A549 (cell line): ENCODE measurements at regions of chr17 and their contacts with region 1.

Region 1: GRCh38 chr17:39547713-39548478 is 59.8 kb downstream of the NEUROD2 start:
- DNase-seq: peak; percentile 69 to 75
- ATAC-seq: peak; percentile 91 to 92
- H3K4me3 ChIP-seq: no peak overlapping the region
- H3K27ac ChIP-seq: no peak overlapping the region
- H3K4me1 ChIP-seq: no peaks in the 10 kb centered on the region
- CTCF ChIP-seq: peak; percentile 99
- EP300 ChIP-seq: no peak
- POLR2A ChIP-seq: no peak
- RAD21 ChIP-seq: peak; percentile 87 to 88

Region 2: DNA sequence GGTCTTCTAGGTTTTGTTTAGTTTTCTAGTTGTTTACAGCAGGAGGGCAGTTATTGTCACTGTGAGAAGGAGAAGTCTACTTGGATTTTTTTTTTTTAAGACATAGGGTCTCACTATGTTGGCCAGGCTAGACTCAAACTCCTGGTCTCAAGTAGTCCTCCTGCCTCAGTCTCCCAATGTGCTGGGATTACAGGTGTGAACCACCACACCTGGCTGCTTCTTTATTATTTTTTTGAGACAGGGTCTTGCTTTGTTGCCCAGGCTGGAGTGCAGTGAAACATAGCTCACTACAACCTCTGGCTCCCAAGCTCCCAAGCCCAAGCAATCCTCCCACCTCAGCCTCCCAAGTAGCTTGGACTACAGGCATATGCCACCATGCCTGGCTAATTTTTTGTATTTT is 253.8 kb before region 1 on chr17:
- CTCF ChIA-PET with region 1: no interaction called
- POLR2A ChIA-PET with region 1: no interaction called
- DNase-seq: no peak
- ATAC-seq: no peak
- H3K4me3 ChIP-seq: no peak overlapping the region
- H3K27ac ChIP-seq: no peak overlapping the region
- H3K4me1 ChIP-seq: no peaks in the 10 kb centered on the region
- CTCF ChIP-seq: no peak
- EP300 ChIP-seq: no peak
- POLR2A ChIP-seq: no peak
- RAD21 ChIP-seq: no peak

Region 3: GRCh38 chr17:39485555-39485954 is 62.3 kb before region 1 on chr17:
- CTCF ChIA-PET with region 1: interaction called, 19 read pairs
- POLR2A ChIA-PET with region 1: no interaction called
- DNase-seq: peak in 1 of 2 experiments; percentile 84
- ATAC-seq: peak; percentile 91 to 100
- H3K4me3 ChIP-seq: no peak overlapping the region
- H3K27ac ChIP-seq: peak overlapping the region; percentile 78 to 83
- H3K4me1 ChIP-seq: peaks cover 34% of the 10 kb centered on the region
- CTCF ChIP-seq: no peak
- EP300 ChIP-seq: peak in 1 of 2 experiments; percentile 18; a peak in 1 of 5 replicates
- POLR2A ChIP-seq: no peak
- RAD21 ChIP-seq: no peak

Region 4: DNA sequence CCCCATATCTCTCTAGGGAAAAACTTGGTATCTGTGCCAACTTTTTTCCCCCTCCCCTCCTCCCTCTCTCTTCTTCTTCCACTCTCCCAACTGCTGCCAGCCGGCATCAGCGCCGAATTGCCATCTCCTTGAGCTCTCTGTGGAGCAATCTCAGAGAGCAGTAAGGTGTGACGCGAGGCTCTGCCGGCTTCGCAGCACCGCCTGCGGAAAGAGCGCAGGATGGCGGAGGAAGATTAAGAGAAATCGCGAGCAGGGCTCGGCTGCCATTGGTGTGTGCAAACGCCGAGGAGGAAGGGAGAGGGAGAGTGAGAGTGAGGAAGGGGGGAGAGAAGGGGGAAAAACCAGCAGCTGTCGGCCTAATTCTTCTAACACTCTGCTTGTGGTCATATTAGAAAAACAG is 15.6 kb after region 1 on chr17:
- CTCF ChIA-PET with region 1: interaction called, 71 read pairs
- POLR2A ChIA-PET with region 1: no interaction called
- DNase-seq: no peak
- ATAC-seq: no peak
- H3K4me3 ChIP-seq: no peak overlapping the region
- H3K27ac ChIP-seq: no peak overlapping the region
- H3K4me1 ChIP-seq: no peaks in the 10 kb centered on the region
- CTCF ChIP-seq: no peak
- EP300 ChIP-seq: no peak
- POLR2A ChIP-seq: no peak
- RAD21 ChIP-seq: no peak

Region 5: DNA sequence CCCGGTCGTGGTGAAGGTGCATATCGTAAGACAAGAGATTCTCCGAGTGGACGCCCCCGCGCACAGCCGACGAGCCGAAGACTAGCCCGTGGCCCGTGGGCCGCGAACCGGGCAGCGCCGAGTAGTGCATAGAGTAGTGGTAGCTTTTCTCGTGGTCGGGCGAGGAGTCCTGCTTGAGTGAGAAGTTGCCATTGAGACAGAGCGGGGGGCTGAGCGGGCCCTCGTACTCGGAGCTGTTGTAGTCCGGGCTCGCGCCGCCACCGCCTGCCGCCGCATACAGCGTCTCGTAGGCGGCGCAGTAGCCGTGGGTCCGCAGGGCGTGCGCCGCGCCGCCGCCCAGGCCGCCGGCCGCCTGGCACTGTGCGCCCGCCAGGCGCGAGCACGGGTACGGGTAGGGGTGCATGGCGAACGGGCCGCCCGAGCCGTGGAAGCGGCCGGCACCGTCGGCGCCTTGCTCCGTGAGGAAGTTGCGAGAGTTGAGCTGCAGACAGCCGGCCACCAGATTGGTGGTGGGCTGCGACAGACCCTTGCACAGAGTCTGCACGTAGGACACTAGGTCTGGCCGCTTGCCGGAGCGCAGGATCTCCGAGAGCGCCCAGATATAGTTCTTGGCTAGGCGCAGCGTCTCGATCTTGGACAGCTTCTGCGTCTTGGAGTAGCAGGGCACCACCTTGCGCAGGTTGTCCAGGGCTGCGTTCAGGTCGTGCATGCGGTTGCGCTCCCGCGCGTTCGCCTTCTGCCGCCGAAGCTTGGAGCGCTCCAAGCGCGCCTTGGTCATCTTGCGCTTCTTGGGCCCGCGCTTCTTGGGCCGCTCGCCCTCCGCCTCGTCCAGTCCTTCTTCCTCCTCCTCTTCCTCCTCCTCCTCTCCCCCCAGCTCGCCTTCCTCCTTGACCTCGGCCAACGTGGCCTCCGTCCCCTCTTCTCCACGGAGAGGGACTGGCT is 57.9 kb after region 1 on chr17:
- CTCF ChIA-PET with region 1: interaction called, 20 read pairs
- POLR2A ChIA-PET with region 1: no interaction called
- DNase-seq: peak in 1 of 2 experiments; percentile 83
- ATAC-seq: peak; percentile 38 to 66
- H3K4me3 ChIP-seq: peak overlapping the region; percentile 30
- H3K27ac ChIP-seq: no peak overlapping the region
- H3K4me1 ChIP-seq: peaks cover 44% of the 10 kb centered on the region
- CTCF ChIP-seq: no peak
- EP300 ChIP-seq: no peak
- POLR2A ChIP-seq: no peak
- RAD21 ChIP-seq: no peak

Region 6: GRCh38 chr17:39653662-39654331 is 105.9 kb after region 1 on chr17:
- CTCF ChIA-PET with region 1: interaction called, 17 read pairs
- POLR2A ChIA-PET with region 1: interaction called, 4 read pairs
- DNase-seq: peak; percentile 67 to 91
- ATAC-seq: peak; percentile 65 to 86; a peak in 5 of 6 replicates
- H3K4me3 ChIP-seq: no peak overlapping the region
- H3K27ac ChIP-seq: no peak overlapping the region
- H3K4me1 ChIP-seq: no peaks in the 10 kb centered on the region
- CTCF ChIP-seq: peak; percentile 90
- EP300 ChIP-seq: no peak
- POLR2A ChIP-seq: no peak
- RAD21 ChIP-seq: peak; percentile 28 to 41; a peak in 3 of 5 replicates

Region 7: DNA sequence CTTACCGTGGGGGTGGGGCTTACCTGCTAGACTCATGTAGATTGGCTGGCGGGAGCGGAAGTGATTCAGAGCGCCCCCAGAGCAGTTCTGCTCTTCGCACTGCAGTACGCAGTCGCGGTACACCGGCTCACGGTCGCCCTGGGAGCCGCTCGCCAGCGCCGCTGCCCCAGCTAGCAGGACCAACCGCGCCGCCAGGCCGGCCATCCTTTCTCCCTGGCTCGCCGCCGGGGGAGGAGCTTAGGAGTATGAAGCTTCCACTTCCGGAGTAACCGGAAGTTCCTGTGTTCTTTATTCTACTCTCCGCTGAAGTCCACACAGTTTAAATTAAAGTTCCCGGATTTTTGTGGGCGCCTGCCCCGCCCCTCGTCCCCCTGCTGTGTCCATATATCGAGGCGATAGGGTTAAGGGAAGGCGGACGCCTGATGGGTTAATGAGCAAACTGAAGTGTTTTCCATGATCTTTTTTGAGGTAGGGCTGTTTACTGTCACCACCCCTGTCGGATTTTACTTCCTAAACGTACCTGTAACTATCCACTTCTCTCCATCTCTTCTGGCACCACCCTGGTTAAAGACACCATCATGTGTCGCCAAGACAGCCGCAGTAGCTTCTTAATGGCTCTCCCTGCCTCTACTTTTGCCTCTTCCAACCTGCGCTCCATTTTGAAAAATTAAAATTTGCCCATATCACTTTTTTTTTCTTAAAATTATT is 140.1 kb after region 1 on chr17 and contains the start of gene PGAP3:
- CTCF ChIA-PET with region 1: no interaction called
- POLR2A ChIA-PET with region 1: no interaction called
- DNase-seq: peak; percentile 96 to 99
- ATAC-seq: peak; percentile 96 to 97
- H3K4me3 ChIP-seq: peak within 1 kb of the TSS; percentile 61
- H3K27ac ChIP-seq: peak within 1 kb of the TSS; percentile 80 to 92
- H3K4me1 ChIP-seq: peaks cover 7% of the 10 kb centered on the region
- CTCF ChIP-seq: 0 out of 3 replicates have a peak, but pooled peaks have one; percentile 5
- EP300 ChIP-seq: no peak
- POLR2A ChIP-seq: peak; percentile 66
- RAD21 ChIP-seq: no peak; a peak in 1 of 5 replicates
- polyA plus RNA-seq, gene PGAP3: 8.5 and 10.6 TPM in 2 replicates